ENCODE measurements at regions of chr7 and their contacts with region 1.

Region 1: DNA sequence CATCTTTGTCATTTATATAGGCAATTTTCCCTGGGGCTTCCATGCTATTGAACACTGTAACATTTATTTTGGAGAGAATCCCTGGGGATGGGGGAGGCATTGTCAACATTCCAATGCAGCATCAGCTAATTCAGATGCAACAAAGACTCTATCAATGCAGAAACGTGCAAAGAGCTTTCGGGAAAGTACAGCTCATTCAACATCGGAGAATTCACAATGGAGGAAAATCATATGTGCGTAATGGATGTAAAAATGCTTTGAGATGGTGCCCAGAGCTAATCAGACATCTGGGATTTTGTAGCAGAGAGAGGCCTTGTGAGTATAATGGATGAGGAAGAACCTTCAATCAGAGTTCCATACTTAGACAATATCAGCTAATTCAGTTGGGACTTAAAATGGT is 28.3 kb upstream of the FIS1 start:
- DNase-seq: no peak
- ATAC-seq: no peak
- H3K4me3 Mint-ChIP-seq: no peak overlapping the region
- H3K27ac Mint-ChIP-seq: no peak overlapping the region
- H3K4me1 Mint-ChIP-seq: no peaks in the 10 kb centered on the region
- H3K27me3 Mint-ChIP-seq: peaks cover 14% of the 10 kb centered on the region
- CTCF ChIP-seq: no peak

Region 2: DNA sequence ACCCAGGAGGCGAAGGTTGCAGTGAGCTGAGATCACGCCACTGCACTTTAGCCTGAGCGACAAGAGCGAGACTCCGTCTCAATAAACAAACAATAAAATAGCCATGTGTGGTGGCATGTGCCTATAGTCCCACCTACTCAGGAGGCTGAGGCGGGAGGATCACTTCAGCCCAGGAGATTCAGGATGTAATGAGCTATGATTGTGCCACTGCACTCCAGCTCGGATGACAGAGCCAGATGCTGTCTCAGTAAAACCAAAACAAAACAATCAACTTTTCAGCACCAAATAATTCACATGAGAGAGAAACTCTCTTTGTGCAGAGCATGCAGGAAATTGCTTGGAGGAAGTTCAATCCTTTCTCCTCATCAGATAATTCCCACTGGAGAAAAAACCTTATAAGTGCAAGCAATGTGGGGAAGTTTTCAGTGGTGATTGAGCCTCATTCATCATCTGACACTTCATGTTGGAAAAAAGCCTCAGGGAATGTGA is 14.9 kb before region 1 on chr7:
- CTCF ChIA-PET with region 1: no interaction called
- POLR2A ChIA-PET with region 1: interaction called, 10 read pairs
- intact Hi-C with region 1: no loop called
- DNase-seq: no peak
- ATAC-seq: no peak
- H3K4me3 Mint-ChIP-seq: no peak overlapping the region
- H3K27ac Mint-ChIP-seq: no peak overlapping the region
- H3K4me1 Mint-ChIP-seq: no peaks in the 10 kb centered on the region
- H3K27me3 Mint-ChIP-seq: peaks cover 12% of the 10 kb centered on the region
- CTCF ChIP-seq: no peak

Region 3: DNA sequence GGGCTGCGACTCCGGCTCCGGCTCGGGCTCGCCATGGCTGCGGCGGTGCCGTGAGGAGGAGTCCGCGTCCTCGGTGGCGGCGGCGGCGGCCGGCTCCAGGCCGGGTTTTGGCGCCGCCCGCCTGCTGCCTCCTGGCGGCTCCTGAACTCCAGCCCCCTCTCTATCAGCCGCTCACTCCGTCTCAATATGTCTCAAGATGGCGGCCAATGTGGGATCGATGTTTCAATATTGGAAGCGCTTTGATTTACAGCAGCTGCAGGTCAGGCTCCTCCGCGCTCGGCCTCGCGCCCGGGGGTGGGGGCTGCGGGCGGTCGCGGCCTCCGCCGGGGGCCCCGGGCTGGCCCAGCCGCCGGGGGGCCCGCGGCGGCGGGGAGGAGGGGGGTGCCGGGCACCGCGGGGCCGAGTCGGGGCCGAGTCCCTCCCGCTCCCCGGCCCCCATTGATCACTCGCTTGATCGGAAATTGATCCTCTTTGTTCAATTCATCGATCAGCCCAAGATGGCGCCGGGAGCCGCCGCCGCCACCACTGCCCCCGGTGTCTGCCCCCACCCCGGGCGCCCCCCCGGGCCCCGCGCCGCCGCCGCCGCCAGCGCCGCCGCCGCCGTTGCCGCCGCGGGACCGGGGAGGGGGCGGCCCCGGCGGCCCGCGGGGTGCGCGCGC is 542.8 kb after region 1 on chr7:
- CTCF ChIA-PET with region 1: no interaction called
- POLR2A ChIA-PET with region 1: no interaction called
- intact Hi-C with region 1: no loop called
- DNase-seq: peak; percentile 74
- ATAC-seq: peak; percentile 77
- H3K4me3 Mint-ChIP-seq: peak overlapping the region; percentile 83
- H3K27ac Mint-ChIP-seq: peak overlapping the region; percentile 65
- H3K4me1 Mint-ChIP-seq: peaks cover 28% of the 10 kb centered on the region
- H3K27me3 Mint-ChIP-seq: no peaks in the 10 kb centered on the region
- CTCF ChIP-seq: no peak

Measured in activated B cell treated with CpG ODN at 0.5 μM for 24 hours (primary cell).